Mammary epithelial cell (primary cell): ENCODE measurements at regions of chr5 and their contacts with region 1.

Region 1: DNA sequence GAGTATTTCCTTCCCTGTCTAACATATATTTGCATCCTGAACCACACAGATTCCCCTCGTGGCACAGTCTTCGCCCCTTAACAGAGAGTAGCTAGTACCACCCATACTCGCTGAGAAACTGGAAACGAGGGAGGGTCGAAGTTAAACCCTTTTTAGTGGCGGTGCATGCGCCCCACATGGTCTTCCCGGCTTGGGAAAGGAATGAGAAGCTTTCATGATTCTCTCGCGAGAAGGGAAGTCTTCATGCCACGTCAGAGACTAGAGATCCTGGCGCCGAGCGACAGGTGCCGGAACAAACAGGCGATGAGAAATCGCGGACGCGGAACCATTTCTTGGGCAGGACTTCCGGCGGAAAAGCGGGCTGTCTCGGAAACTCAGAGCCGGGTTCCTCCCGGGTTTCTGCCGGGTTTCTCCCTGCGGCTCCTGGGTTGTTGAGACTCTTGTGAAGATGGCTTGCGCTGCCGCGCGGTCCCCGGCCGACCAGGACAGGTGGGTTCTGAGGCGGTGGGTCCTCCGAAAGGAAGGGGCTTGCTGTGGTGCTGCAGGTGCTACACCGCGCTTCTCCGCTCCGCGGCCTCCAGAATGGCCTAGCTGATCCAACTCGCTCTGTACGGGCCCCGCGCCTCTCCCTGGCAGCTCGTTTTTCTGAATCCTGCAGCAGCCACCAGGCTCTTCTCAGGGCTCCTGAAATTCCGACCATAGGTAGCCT is at the start of gene SRP19:
- DNase-seq: peak; percentile 96
- H3K4me3 ChIP-seq: peak within 1 kb of the TSS; percentile 73 to 100 (median 99)
- H3K27ac ChIP-seq: peak within 1 kb of the TSS; percentile 92
- H3K4me1 ChIP-seq: peaks cover 20% of the 10 kb centered on the region
- H3K27me3 ChIP-seq: no peaks in the 10 kb centered on the region
- CTCF ChIP-seq: no peak
- total RNA-seq, gene SRP19: 31.8 to 57.2 TPM

Region 2: GRCh38 chr5:112976432-112977309 is 115.6 kb after region 1 on chr5 and contains the start of gene DCP2:
- CTCF ChIA-PET with region 1: no interaction called
- dilution Hi-C with region 1: loop called (anchors 10 kb)
- in situ Hi-C with region 1: no loop called
- intact Hi-C with region 1: no loop called
- DNase-seq: peak; percentile 98
- H3K4me3 ChIP-seq: peak within 1 kb of the TSS; percentile 75 to 100 (median 88)
- H3K27ac ChIP-seq: peak within 1 kb of the TSS; percentile 80
- H3K4me1 ChIP-seq: peaks cover 20% of the 10 kb centered on the region
- H3K27me3 ChIP-seq: no peaks in the 10 kb centered on the region
- CTCF ChIP-seq: no peak
- total RNA-seq, gene DCP2: 28.3 to 31.7 TPM